Common myeloid progenitor, CD34-positive (primary cell): ENCODE measurements at regions of chr19 and their contacts with region 1.

Region 1: DNA sequence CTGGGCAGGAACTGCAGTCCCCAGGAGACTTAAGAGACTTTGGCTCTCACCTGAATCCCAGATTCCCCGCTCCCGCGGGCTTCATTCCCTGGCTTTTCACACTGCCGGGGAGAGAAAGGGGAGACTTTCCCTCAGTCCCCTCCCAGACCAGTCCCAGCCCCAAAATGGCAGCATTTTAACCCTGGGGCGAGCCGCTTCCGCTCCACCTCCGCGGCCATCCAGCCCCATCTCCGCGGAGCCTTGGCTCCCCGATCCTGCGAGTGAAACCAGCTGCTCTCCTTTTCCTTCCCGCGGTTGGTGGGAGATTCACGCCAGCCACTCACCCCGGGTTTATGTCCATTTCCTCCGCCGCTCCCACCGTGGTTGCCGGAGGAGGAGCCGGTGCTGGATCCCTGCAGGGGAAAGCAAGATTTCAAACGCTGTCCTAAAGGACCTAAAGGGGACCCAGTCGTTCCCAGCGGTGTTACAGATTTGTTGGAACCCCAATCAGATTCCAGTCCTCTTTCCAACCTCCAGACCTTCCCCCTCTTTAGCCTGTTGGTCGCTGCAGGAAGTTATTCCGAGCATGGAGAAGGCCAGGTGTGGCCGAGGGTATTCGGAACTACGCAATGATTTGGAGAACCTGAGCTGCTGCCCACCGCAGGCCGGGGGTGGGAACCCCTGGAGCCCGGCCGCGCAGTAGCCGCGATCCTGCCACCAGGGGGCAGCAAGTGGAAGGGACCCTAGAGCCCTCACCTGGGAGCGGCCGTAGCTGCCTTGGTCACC is 3.4 kb downstream of the DMKN start:
- DNase-seq: peak; percentile 50 to 68 (median 62)
- H3K4me3 ChIP-seq: peak overlapping the region in 5 of 7 experiments; percentile 1 to 75 (median 52)
- H3K27ac ChIP-seq: no peak overlapping the region
- H3K4me1 ChIP-seq: peaks cover 0 to 19% (median 16%) of the 10 kb centered on the region in 4 experiments
- H3K27me3 ChIP-seq: peaks cover 4 to 61% (median 41%) of the 10 kb centered on the region in 5 experiments

Region 2: DNA sequence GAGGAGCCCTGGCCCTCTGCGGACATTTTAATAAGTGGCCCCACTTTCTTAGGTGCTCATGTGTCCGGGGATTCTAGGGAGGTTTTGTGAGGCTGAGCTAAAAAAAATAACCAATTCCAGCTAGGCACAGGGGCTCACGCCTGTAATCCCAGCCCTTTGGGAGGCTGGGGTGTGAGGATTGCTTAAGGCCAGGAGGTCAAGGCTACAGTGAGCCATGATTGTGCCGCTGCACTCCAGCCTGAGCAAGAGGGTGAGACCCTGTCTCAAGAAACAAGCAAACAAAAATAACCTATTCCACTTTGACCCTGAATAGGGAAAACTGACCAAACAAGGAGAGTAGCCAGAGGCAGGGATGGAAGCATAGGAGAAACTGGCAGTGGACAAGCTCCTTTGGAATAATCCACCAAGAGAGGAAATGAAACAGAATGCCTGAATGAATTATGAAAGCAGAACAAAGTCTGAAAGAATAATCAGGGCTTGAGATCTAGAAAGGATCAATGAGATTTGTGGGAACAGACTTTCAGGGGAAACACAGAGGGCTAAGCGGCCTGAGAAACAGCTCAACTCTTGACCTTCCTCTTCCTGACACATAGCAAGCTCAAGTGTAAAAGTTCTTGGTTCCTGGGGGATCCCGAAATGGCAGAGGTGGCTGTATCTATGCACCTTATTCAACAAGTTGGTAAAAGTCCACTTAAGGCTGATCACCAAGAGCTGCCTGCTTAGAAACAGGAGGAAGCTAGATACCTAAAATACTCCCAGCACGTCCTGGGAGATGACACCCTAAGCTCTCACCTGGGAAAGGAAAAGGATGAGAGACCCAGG is 92.1 kb before region 1 on chr19:
- CTCF ChIA-PET with region 1: no interaction called
- POLR2A ChIA-PET with region 1: no interaction called
- DNase-seq: no peak
- H3K4me3 ChIP-seq: no peak overlapping the region
- H3K27ac ChIP-seq: no peak overlapping the region
- H3K4me1 ChIP-seq: peaks cover 0 to 5% (median 2%) of the 10 kb centered on the region in 4 experiments
- H3K27me3 ChIP-seq: peaks cover 0 to 14% (median 0%) of the 10 kb centered on the region in 5 experiments

Region 3: DNA sequence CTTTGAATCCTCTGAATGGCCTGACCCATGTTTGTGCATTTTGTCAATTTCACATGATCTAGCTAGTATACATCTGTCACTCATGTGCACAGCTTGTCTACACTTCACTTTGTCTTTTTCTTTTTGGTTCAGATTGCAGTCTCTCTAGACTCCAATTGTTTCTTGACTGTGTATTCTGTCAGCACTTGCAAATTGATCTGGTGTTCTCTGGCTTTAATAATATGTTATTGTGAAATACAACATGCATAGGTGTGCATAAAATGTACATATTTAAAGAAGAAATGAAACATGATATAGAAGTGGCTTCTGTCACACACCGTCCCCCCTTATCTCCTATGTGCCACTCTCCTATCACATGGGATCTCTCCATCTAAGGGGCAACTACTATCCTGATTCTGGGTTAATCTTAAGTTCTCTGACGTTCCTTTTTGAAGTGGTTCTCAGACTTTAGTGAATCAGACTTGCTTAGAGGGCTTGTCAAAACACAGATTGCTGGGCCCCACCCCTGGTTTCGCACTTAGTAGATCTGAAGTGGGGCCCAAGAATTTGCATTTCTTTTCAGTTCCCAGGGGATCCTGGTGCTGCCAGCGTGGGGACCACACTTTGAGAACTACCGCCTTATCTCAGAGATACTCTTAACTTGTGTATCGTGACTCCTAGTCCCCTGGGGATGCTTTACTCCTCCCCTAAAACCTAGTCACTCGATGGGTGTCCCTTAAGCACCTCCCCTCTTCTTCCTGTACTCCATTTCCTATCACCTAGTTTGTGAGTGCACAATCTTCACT is 25.6 kb before region 1 on chr19:
- CTCF ChIA-PET with region 1: interaction called, 12 read pairs
- POLR2A ChIA-PET with region 1: no interaction called
- DNase-seq: peak in 1 of 3 donors; percentile 13
- H3K4me3 ChIP-seq: no peak overlapping the region
- H3K27ac ChIP-seq: no peak overlapping the region
- H3K4me1 ChIP-seq: peaks cover 0 to 2% (median 0%) of the 10 kb centered on the region in 4 experiments
- H3K27me3 ChIP-seq: peaks cover 0 to 9% (median 0%) of the 10 kb centered on the region in 5 experiments

Region 4: GRCh38 chr19:35549174-35549788 is 39.2 kb after region 1 on chr19:
- CTCF ChIA-PET with region 1: interaction called, 16 read pairs
- POLR2A ChIA-PET with region 1: no interaction called
- DNase-seq: peak; percentile 58 to 76 (median 73)
- H3K4me3 ChIP-seq: no peak overlapping the region
- H3K27ac ChIP-seq: no peak overlapping the region
- H3K4me1 ChIP-seq: peaks cover 1 to 20% (median 15%) of the 10 kb centered on the region in 4 experiments
- H3K27me3 ChIP-seq: no peaks in the 10 kb centered on the region

Region 5: GRCh38 chr19:35592226-35592625 is 82.2 kb after region 1 on chr19:
- CTCF ChIA-PET with region 1: interaction called, 14 read pairs
- POLR2A ChIA-PET with region 1: no interaction called
- DNase-seq: peak; percentile 72 to 82 (median 76)
- H3K4me3 ChIP-seq: no peak overlapping the region
- H3K27ac ChIP-seq: no peak overlapping the region
- H3K4me1 ChIP-seq: no peaks in the 10 kb centered on the region
- H3K27me3 ChIP-seq: peaks cover 0 to 5% (median 0%) of the 10 kb centered on the region in 5 experiments

Region 6: DNA sequence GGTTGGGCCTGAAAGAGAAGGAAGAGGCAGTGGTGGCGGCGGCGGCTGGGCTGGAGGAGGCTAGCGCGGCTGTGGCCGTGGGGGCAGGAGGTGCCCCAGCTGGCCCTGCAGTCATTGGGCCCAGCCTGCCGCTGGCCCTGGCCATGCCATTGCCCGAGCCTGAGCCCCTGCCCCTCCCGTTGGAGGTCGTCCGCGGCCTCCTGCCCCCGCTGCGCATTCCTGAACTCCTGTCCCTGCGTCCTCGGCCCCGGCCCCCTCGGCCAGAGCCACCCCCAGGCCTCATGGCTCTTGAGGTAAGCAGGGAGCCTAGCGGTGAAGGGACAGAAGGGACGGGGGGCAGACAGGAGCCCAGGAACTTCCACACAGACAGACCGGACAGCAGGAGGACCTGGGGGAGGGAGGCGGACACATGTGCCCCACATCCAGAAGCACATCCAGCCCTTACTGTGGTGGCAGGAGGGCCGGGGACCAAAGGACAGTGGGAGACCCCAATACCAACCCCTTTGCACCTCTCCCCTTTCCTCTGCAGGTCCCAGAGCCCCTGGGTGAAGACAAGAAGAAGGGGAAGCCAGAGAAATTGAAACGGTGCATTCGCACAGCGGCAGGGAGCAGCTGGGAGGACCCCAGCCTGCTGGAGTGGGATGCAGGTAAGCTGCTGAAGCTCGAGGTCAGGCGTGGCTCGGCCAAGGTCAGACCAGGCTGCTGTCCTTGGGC is 123.8 kb after region 1 on chr19:
- CTCF ChIA-PET with region 1: no interaction called
- POLR2A ChIA-PET with region 1: no interaction called
- DNase-seq: no peak
- H3K4me3 ChIP-seq: no peak overlapping the region
- H3K27ac ChIP-seq: no peak overlapping the region
- H3K4me1 ChIP-seq: peaks cover 5 to 8% (median 6%) of the 10 kb centered on the region in 4 experiments
- H3K27me3 ChIP-seq: no peaks in the 10 kb centered on the region